Panc1 (cell line): ENCODE measurements at regions of chr14 and their contacts with region 1.

Region 1: DNA sequence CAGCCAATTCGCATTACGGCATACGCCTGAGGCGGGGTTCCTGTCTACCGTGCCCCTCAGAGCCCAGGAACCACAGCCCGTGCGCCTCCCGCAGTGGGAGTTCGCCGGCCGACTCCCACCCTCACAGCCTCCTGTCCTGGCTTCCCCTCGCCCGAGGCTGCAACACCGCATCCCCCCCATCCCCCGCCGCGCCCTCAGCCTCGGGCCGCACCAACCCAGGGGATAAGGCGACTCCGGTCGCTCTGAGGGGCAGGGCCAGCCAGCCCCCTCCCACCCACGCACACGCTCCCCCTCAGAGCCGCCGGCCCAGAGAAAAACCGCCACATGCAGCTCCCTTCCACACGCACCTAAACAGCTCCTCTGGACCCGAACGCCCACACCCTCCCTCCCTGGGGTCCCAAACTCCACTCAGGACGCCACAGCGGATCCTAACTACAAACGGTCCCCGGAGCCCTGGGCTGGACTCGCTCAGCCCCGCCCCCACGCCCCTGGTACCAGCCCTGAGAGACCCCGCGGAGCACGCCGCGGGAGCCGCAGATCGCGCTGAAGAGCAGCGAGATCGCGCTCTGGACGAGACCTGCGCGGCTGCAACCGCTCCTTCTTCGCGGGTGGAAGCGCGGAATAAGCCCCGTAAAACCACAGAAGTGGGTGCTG is at the start of gene C14orf39:
- DNase-seq: no peak
- ATAC-seq: no peak
- H3K4me3 ChIP-seq: peak within 1 kb of the TSS in 1 of 2 experiments; percentile 22; a peak in 1 of 4 replicates
- H3K27ac ChIP-seq: no peak within 1 kb of the TSS
- H3K4me1 ChIP-seq: no peaks in the 10 kb centered on the region
- H3K27me3 ChIP-seq: no peaks in the 10 kb centered on the region
- CTCF ChIP-seq: no peak
- total RNA-seq, gene C14orf39: 0.08 TPM

Region 2: DNA sequence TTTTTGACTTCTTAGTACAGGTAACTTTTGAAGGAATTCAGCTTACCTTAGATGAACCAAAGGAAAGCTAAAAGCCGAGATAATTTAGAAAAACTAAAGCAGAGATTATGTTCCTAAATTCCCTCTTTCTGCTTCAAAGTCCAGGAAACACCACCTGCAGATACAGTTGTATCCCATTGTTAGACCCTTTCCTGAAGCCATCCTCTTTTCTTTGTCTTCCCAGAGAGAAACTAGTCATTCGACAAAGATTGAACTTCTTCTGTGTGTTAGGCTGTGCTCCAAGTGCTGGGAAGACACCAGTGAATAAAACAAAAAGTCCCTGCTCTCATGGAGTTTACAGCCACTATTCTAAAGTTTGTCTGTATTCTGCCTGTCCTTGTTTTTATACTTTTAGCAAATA is 207.4 kb before region 1 on chr14:
- CTCF ChIA-PET with region 1: no interaction called
- POLR2A ChIA-PET with region 1: no interaction called
- in situ Hi-C with region 1: no loop called
- intact Hi-C with region 1: no loop called
- DNase-seq: no peak
- ATAC-seq: no peak
- H3K4me3 ChIP-seq: no peak overlapping the region
- H3K27ac ChIP-seq: no peak overlapping the region
- H3K4me1 ChIP-seq: peaks cover 2% of the 10 kb centered on the region; the same call in 1 of the 2 replicates
- H3K27me3 ChIP-seq: no peaks in the 10 kb centered on the region
- CTCF ChIP-seq: no peak

Region 3: GRCh38 chr14:60349663-60350365 is 135.9 kb before region 1 on chr14:
- CTCF ChIA-PET with region 1: no interaction called
- POLR2A ChIA-PET with region 1: no interaction called
- in situ Hi-C with region 1: no loop called
- intact Hi-C with region 1: loop called (anchors 5 kb)
- DNase-seq: no peak
- ATAC-seq: peak; percentile 74
- H3K4me3 ChIP-seq: no peak overlapping the region
- H3K27ac ChIP-seq: no peak overlapping the region
- H3K4me1 ChIP-seq: no peaks in the 10 kb centered on the region
- H3K27me3 ChIP-seq: no peaks in the 10 kb centered on the region
- CTCF ChIP-seq: peak; percentile 72

Region 4: DNA sequence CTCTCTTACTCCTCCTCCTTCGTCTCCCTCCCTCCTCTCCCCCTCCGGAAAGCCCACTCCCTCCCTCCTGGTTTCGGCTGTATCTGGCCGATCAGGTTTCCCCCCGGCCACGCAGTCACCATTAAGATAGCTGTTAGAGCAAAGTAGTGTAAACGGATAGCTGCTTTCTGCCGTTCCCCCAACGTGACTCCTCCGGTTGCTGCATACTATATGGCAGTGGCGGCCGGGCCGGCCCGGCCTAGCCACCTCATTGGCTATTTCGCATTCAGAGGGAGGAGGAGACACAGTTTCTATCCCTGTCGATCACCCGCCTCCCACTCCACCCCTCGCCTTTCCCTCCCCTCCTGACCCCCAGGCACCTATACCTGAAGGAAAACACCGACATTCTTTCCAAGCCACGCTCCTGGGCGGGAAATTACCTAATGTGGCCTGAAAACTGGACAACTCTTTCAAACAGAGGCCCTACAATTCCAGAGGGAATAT is 238.5 kb after region 1 on chr14 and contains the start of gene SIX4:
- CTCF ChIA-PET with region 1: no interaction called
- POLR2A ChIA-PET with region 1: no interaction called
- in situ Hi-C with region 1: no loop called
- intact Hi-C with region 1: no loop called
- DNase-seq: peak; percentile 35
- ATAC-seq: peak; percentile 91
- H3K4me3 ChIP-seq: peak within 1 kb of the TSS; percentile 79 to 80
- H3K27ac ChIP-seq: peak within 1 kb of the TSS; percentile 89
- H3K4me1 ChIP-seq: peaks cover 11% of the 10 kb centered on the region
- H3K27me3 ChIP-seq: no peaks in the 10 kb centered on the region
- CTCF ChIP-seq: no peak
- total RNA-seq, gene SIX4: 17.3 TPM